WTC11 (cell line): ENCODE measurements at regions of chr17 and their contacts with region 1.

Region 1: GRCh38 chr17:44350733-44351226 is 5.7 kb downstream of the GRN start:
- DNase-seq: peak; percentile 82
- ATAC-seq: peak; percentile 68
- H3K4me3 Mint-ChIP-seq: no peak overlapping the region
- H3K27ac Mint-ChIP-seq: no peak overlapping the region
- H3K4me1 Mint-ChIP-seq: peaks cover 14% of the 10 kb centered on the region
- H3K27me3 Mint-ChIP-seq: peaks cover 3% of the 10 kb centered on the region; the same call in 1 of the 2 replicates
- CTCF ChIP-seq: peak; percentile 69

Region 2: DNA sequence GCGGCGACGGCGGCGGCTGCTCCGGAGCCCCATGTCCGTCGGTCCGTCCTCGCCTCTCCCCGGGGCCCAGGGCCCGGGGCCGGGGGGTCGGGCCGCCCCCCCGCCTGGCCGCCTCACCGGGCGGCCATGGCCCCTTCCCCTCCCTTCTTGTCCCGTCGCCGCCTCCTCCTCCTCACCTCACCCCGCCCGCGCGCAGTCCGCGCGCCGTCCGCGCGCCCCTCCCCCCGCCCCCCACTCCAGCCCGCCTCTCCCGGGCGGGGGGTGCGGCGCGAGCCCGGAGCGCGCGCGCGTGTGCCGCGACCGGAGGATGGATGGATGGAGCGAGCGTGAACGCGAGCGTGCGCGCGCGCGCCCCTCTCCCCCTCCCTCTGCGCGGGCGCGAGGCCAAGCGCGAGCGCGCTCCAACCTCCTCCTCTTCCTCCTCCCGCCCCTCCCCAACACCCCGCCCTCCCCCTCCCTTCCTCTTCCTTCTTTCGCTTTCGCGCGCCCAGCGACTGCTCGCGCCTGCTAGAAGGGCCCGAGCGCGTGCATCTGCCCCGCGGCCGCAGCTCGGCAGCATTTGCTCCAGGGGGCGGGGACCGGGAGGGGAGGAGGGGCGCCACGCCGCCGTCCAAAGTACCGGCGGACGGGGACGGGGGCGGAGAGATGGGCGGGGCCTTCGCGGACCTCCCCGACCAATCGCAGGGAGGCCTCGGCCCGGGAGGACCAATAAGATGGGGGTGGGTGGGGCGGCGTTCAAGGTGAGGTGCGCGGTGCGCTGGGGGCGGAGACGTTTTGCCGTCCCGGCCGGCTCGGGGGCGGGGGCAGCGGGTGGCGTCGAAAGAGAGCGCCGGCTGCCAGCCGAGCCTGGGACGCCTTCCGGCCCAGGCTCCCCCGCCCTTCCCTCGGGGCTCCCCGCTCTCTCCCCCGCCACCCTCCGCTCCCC is 151.0 kb before region 1 on chr17 and contains the start of gene ATXN7L3:
- CTCF ChIA-PET with region 1: interaction called, 26 read pairs
- POLR2A ChIA-PET with region 1: no interaction called
- DNase-seq: peak; percentile 100
- ATAC-seq: peak; percentile 87
- H3K4me3 Mint-ChIP-seq: peak within 1 kb of the TSS; percentile 85
- H3K27ac Mint-ChIP-seq: peak within 1 kb of the TSS; percentile 98
- H3K4me1 Mint-ChIP-seq: peaks cover 24% of the 10 kb centered on the region
- H3K27me3 Mint-ChIP-seq: no peaks in the 10 kb centered on the region
- CTCF ChIP-seq: no peak
- total RNA-seq, gene ATXN7L3: 113 to 124 TPM (median 114 TPM) in 3 replicates

Region 3: GRCh38 chr17:44218344-44219107 is 132.3 kb before region 1 on chr17:
- CTCF ChIA-PET with region 1: interaction called, 20 read pairs
- POLR2A ChIA-PET with region 1: interaction called, 8 read pairs
- DNase-seq: peak; percentile 72
- ATAC-seq: peak; percentile 30
- H3K4me3 Mint-ChIP-seq: peak overlapping the region; percentile 82
- H3K27ac Mint-ChIP-seq: no peak overlapping the region
- H3K4me1 Mint-ChIP-seq: peaks cover 17% of the 10 kb centered on the region
- H3K27me3 Mint-ChIP-seq: no peaks in the 10 kb centered on the region
- CTCF ChIP-seq: peak; percentile 26; the same call in 1 of the 2 replicates

Region 4: GRCh38 chr17:44324571-44325275 is 26.1 kb before region 1 on chr17 and contains the start of gene SLC25A39:
- CTCF ChIA-PET with region 1: interaction called, 78 read pairs
- POLR2A ChIA-PET with region 1: interaction called, 4 read pairs
- DNase-seq: peak; percentile 94
- ATAC-seq: peak; percentile 71
- H3K4me3 Mint-ChIP-seq: peak within 1 kb of the TSS; percentile 86
- H3K27ac Mint-ChIP-seq: peak within 1 kb of the TSS; percentile 76
- H3K4me1 Mint-ChIP-seq: peaks cover 13% of the 10 kb centered on the region
- H3K27me3 Mint-ChIP-seq: peaks cover 8% of the 10 kb centered on the region
- CTCF ChIP-seq: no peak
- total RNA-seq, gene SLC25A39: 254 to 271 TPM (median 268 TPM) in 3 replicates

Region 5: DNA sequence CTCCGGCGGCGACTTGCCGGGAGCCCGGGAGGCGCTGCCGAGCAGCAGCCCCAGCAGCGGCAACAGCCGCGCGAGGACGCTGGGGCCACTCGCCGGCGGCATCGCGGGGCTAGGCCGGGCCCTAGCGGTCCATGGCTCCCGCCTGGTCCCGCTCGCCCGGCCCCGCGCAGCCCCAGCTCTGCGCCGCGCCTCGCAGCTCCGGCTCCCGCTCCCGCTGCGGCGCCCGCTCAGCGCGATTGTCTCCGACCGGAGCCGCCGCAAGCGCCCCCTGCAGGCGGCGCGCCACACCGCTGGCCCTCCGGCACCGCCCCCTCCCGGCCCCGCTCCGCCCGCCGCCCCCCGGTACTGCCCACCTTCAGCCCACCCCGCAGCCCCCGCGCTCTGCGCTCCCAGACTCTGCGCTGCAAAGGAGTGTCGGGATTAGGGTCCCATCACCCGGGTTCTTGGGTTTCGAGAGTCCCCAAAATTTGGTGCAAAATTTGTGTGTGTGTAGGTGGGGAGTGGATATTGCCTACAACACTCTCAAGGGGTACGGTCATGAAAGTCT is 12.9 kb after region 1 on chr17 and contains the start of gene FAM171A2:
- CTCF ChIA-PET with region 1: interaction called, 102 read pairs
- POLR2A ChIA-PET with region 1: interaction called, 6 read pairs
- DNase-seq: peak; percentile 79
- ATAC-seq: peak; percentile 76
- H3K4me3 Mint-ChIP-seq: peak within 1 kb of the TSS; percentile 74
- H3K27ac Mint-ChIP-seq: no peak within 1 kb of the TSS
- H3K4me1 Mint-ChIP-seq: peaks cover 22% of the 10 kb centered on the region
- H3K27me3 Mint-ChIP-seq: peaks cover 42% of the 10 kb centered on the region
- CTCF ChIP-seq: peak; percentile 79
- total RNA-seq, gene FAM171A2: 28.2 to 29.9 TPM (median 28.5 TPM) in 3 replicates

Region 6: DNA sequence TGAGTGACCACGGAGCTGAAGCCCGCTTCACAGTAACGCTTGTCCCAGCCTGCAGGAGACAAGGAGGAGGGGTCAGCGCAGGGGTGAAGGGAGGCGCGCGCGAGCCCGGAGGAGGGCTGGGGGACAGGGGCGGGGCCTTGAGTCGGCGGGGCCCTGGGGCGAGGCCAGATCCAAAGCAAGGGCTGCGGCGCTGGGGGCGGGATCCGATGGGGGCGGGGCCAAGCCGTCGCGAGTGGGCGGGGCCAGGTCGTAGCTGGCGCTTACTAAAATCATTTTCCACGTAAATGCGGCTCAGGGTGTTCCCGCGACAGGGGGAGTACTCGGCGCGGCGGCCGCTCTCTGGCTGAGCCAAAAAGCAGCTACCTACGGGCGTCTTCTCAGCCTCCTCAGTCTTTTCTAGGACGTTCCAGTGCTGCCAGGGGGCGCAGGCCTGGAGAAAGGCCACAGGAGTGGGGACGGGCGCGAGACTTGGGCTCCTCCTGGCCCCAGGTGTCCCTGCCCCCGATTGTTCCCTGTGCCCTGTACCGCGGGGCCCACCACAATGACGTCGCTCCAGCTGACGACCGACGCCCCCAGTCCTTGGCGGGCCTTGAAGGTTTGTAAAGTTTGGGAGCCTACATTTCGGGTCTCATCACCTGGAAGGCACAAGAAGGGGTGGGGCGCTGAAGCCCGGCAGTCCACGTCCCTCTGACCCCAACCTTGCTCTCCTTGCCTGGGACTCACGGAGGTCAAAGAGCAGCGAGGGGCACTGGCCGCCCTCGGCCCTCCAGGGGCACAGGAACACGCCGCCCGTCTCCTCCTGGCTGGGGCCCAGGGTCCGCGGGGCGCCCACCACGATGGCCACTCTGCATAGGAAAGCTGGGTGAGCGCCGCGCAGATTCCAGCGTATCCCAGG is 34.8 kb after region 1 on chr17:
- CTCF ChIA-PET with region 1: interaction called, 33 read pairs
- POLR2A ChIA-PET with region 1: no interaction called
- DNase-seq: peak; percentile 96
- ATAC-seq: peak; percentile 90
- H3K4me3 Mint-ChIP-seq: peak overlapping the region; percentile 80
- H3K27ac Mint-ChIP-seq: no peak overlapping the region
- H3K4me1 Mint-ChIP-seq: peaks cover 19% of the 10 kb centered on the region
- H3K27me3 Mint-ChIP-seq: peaks cover 59% of the 10 kb centered on the region
- CTCF ChIP-seq: no peak